ENCODE measurements at regions of chr11 and their contacts with region 1.

Region 1: GRCh38 chr11:112113539-112114457 is 27.1 kb downstream of the SDHD start:
- DNase-seq: no peak
- H3K4me3 ChIP-seq: no peak overlapping the region
- H3K27ac ChIP-seq: no peak overlapping the region
- H3K4me1 ChIP-seq: peaks cover 5% of the 10 kb centered on the region
- H3K27me3 ChIP-seq: no peaks in the 10 kb centered on the region
- CTCF ChIP-seq: peak; percentile 23 to 62 (median 29)
- POLR2A ChIP-seq: no peak

Region 2: DNA sequence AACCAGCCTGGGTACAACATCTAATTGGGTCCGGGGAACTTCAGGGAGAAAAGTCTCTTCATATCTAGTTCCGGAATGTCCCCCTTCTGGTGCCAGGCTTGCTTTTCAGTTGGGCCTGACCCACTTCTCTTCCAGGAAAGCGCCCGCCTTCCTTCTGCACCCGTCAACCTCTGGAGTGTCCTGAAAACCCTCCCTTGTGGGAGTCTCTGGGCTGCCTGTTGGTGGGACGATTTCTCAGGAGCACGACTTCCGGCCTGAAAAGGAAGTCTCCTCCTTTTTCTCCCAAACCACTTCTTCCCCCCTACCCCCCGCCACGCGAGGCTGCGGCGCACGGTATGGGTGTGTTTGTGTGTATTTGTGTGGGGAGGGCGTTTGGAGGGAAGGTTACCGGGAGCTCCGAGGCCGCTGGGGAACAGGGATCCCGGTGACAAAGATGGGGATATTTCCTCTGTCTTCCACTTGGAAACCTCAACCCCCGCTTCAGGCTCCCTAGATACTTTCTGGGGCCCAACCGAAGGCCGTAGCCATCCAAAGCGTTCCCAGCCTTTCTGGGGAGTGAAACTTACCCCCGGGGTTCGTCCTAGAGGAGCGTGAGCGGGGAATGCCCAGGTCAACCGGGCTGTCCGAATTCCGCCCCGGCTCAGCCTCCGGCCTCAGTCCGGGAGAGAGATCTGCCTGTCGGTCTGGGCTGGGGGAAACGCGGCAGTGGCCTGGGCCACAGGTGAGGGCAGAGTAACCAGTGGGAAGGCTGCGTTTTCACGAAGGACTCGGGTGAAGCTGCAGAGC is 39.6 kb before region 1 on chr11 and contains the start of gene NKAPD1:
- intact Hi-C with region 1: loop called (anchors 2 kb)
- DNase-seq: peak in 1 of 2 donors; percentile 90
- H3K4me3 ChIP-seq: peak within 1 kb of the TSS; percentile 85 to 89
- H3K27ac ChIP-seq: peak within 1 kb of the TSS; percentile 82
- H3K4me1 ChIP-seq: peaks cover 30% of the 10 kb centered on the region
- H3K27me3 ChIP-seq: no peaks in the 10 kb centered on the region
- CTCF ChIP-seq: no peak
- POLR2A ChIP-seq: no peak
- total RNA-seq, gene NKAPD1: 11.8 TPM

Region 3: GRCh38 chr11:112280268-112281126 is 166.7 kb after region 1 on chr11:
- intact Hi-C with region 1: loop called (anchors 10 kb)
- DNase-seq: no peak
- H3K4me3 ChIP-seq: peak overlapping the region; percentile 41 to 45
- H3K27ac ChIP-seq: peak overlapping the region; percentile 54
- H3K4me1 ChIP-seq: no peaks in the 10 kb centered on the region
- H3K27me3 ChIP-seq: no peaks in the 10 kb centered on the region
- CTCF ChIP-seq: peak; percentile 16 to 80 (median 46)
- POLR2A ChIP-seq: no peak

Measured in vagina (tissue), 2 donors.